Transverse colon (tissue), 4 donors: ENCODE measurements at regions of chr14 and their contacts with region 1.

Region 1: GRCh38 chr14:100495917-100496316 is 91.3 kb downstream of the BEGAIN start:
- DNase-seq: no peak
- H3K4me3 ChIP-seq: no peak overlapping the region
- H3K27ac ChIP-seq: no peak overlapping the region
- H3K4me1 ChIP-seq: no peaks in the 10 kb centered on the region
- H3K27me3 ChIP-seq: no peaks in the 10 kb centered on the region
- CTCF ChIP-seq: no peak
- EP300 ChIP-seq: no peak
- POLR2A ChIP-seq: no peak

Region 2: GRCh38 chr14:100471441-100472093 is 24.4 kb before region 1 on chr14:
- in situ Hi-C with region 1: no loop called
- intact Hi-C with region 1: loop called (anchors 2 kb)
- DNase-seq: no peak
- H3K4me3 ChIP-seq: no peak overlapping the region
- H3K27ac ChIP-seq: no peak overlapping the region
- H3K4me1 ChIP-seq: peaks cover 0 to 2% (median 0%) of the 10 kb centered on the region in 4 donors
- H3K27me3 ChIP-seq: no peaks in the 10 kb centered on the region
- CTCF ChIP-seq: no peak
- EP300 ChIP-seq: no peak
- POLR2A ChIP-seq: no peak